Activated CD8-positive, alpha-beta T cell treated with anti-CD3 and anti-CD28 coated beads for 36 hours (primary cell): ENCODE measurements at regions of chr10 and their contacts with region 1.

Region 1: GRCh38 chr10:103712570-103713498 is 142.5 kb downstream of the SH3PXD2A start:
- DNase-seq: peak; percentile 92
- ATAC-seq: peak; percentile 97
- H3K4me3 Mint-ChIP-seq: no peak overlapping the region
- H3K27ac Mint-ChIP-seq: no peak overlapping the region
- H3K4me1 Mint-ChIP-seq: no peaks in the 10 kb centered on the region
- H3K27me3 Mint-ChIP-seq: no peaks in the 10 kb centered on the region
- CTCF ChIP-seq: peak; percentile 90

Region 2: GRCh38 chr10:103626178-103626577 is 86.7 kb before region 1 on chr10:
- CTCF ChIA-PET with region 1: no interaction called
- POLR2A ChIA-PET with region 1: no interaction called
- intact Hi-C with region 1: no loop called
- DNase-seq: no peak
- ATAC-seq: no peak
- H3K4me3 Mint-ChIP-seq: no peak overlapping the region
- H3K27ac Mint-ChIP-seq: no peak overlapping the region
- H3K4me1 Mint-ChIP-seq: no peaks in the 10 kb centered on the region
- H3K27me3 Mint-ChIP-seq: no peaks in the 10 kb centered on the region
- CTCF ChIP-seq: no peak

Region 3: DNA sequence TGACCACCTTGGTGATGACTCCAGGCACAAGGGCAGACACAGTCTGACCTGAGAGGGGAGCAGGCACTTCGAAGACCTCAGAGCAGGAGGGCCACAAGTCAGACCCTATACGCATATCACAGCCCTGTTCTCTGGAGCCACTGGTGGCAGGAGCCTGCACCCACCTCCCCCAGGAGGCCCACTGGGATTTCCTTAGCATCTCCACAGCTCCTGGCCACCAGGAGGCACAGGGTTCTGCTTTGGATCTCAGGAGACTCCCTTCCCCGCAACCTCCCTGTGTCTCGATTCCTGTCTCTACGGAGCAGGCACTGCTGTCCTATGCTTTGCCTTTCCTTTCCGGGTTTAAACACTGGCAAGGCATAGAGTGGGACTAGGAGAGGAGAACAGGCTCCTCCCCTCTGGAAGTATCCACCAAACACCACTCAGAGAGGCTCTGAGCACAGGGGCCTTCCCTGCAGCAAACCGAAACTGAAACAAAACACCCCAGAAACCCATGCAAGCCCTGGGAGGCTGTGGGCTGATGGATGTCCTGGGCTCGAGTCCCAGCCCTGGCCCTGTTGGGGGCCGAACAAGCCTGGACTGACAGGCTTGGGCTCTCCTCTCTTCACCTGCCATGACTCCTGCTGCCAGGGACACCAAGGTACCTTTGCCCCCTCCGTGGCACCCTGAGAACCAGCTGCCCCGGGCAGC is 53.0 kb before region 1 on chr10:
- CTCF ChIA-PET with region 1: no interaction called
- POLR2A ChIA-PET with region 1: no interaction called
- intact Hi-C with region 1: no loop called
- DNase-seq: peak; percentile 73
- ATAC-seq: peak; percentile 89
- H3K4me3 Mint-ChIP-seq: peak overlapping the region; percentile 83
- H3K27ac Mint-ChIP-seq: peak overlapping the region; percentile 85
- H3K4me1 Mint-ChIP-seq: peaks cover 14% of the 10 kb centered on the region
- H3K27me3 Mint-ChIP-seq: no peaks in the 10 kb centered on the region
- CTCF ChIP-seq: peak; percentile 42

Region 4: GRCh38 chr10:103701380-103702271 is 11.2 kb before region 1 on chr10:
- CTCF ChIA-PET with region 1: interaction called, 10 read pairs
- POLR2A ChIA-PET with region 1: no interaction called
- intact Hi-C with region 1: no loop called
- DNase-seq: no peak
- ATAC-seq: no peak
- H3K4me3 Mint-ChIP-seq: no peak overlapping the region
- H3K27ac Mint-ChIP-seq: no peak overlapping the region
- H3K4me1 Mint-ChIP-seq: peaks cover 5% of the 10 kb centered on the region
- H3K27me3 Mint-ChIP-seq: no peaks in the 10 kb centered on the region
- CTCF ChIP-seq: no peak

Region 5: DNA sequence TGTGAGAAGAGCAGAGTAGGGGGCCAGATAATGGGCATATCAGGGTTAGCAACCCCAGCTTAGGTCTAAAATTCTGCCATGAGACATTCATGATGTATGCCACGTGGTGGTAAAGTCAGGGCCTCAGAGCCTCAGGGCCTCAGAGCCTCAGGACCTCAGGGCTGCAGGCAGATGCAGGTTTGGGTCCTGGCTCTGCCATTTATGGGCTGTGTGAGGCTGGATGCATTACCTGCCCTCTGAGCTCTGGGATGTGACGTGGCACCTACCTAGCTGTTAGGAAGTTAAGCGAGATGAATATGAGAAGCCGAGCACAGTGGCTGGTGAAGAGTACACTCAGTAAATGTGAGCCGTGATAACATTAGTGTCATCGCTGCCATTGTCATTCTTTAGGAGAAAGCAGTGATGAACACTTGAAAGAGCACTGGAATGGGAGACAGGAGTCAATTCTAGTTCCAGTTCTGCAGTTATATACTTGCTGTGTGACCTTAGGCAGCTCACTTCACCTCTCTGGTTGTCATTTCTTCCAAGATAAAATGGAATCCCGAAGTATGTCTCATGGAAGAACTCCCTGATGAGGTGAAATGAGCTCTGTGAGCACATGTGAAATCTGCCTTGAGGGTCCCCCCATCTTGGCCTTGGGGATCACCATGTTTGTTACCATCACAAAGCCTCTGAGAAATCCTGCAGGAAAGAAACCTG is 15.3 kb after region 1 on chr10:
- CTCF ChIA-PET with region 1: interaction called, 13 read pairs
- POLR2A ChIA-PET with region 1: interaction called, 4 read pairs
- intact Hi-C with region 1: no loop called
- DNase-seq: no peak
- ATAC-seq: no peak
- H3K4me3 Mint-ChIP-seq: no peak overlapping the region
- H3K27ac Mint-ChIP-seq: no peak overlapping the region
- H3K4me1 Mint-ChIP-seq: no peaks in the 10 kb centered on the region
- H3K27me3 Mint-ChIP-seq: no peaks in the 10 kb centered on the region
- CTCF ChIP-seq: no peak

Region 6: DNA sequence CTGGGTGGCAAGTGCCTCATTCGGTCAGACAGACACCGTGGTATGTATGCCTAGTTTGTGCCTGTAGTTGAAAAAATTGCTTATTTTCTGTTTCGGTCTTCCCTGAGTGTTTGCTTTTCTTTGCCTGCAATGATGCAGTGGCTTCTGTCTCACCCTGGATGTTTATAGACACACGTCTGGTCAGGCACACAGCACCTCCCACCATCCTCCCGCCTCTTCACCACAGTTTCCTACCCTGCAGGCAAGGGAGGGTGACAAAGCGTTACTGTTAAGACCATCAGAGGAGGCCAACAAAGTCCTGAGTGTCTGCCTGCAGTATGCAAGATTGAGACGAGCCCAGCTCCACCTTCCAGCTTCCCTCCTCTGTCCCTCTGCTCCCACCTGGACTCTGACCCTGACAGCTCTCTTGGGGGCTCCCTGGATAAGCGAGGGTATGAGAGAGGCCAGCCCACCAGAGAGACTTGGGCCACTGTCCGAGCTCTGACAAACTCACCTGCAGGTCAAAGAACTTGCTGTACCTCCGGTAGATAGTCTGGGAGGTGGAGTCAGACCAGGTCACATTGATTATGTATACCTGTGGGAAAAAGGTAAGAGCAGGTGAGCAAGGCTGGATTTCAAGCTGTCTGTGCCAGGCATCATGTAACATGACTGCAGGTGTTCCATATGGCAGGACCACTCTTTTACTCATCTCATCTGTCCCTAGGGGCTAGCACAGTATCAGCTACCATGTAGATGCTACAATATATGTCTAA is 88.1 kb after region 1 on chr10:
- CTCF ChIA-PET with region 1: interaction called, 12 read pairs
- POLR2A ChIA-PET with region 1: interaction called, 3 read pairs
- intact Hi-C with region 1: no loop called
- DNase-seq: peak; percentile 79
- ATAC-seq: peak; percentile 97
- H3K4me3 Mint-ChIP-seq: no peak overlapping the region
- H3K27ac Mint-ChIP-seq: peak overlapping the region; percentile 39
- H3K4me1 Mint-ChIP-seq: peaks cover 20% of the 10 kb centered on the region
- H3K27me3 Mint-ChIP-seq: no peaks in the 10 kb centered on the region
- CTCF ChIP-seq: no peak

Region 7: DNA sequence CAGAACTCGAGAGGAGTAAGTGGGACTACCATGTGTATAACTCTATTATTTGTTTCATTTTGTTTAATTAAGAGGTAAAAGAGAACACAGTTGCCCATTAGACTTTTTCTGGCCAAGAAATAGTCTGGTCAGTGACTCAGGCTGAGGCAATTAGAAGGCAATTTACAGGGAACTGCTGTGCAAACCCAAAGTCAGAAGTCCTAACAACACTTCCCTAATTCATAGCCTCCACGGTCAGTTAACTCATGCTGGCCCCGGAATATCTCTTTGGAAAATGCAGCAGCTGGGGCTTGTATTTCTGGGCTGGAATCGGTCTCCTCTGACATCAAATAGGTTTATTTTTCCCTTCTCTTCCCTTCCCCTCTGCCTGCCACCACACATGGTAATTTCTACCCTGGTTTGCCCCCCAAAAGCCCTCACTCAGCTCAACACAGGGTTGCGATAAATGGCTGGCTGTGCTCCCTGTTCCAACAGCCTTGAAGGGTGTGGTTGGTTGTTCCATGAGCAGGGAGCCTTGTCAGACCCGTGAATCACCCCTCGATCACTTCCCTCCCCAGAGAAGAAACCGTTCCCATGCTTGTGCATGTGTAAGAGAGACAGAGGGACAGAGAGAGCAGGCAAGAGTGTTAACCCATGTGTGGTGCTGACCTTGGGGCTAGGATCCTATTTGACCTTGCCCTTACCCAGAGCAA is 137.2 kb after region 1 on chr10:
- CTCF ChIA-PET with region 1: interaction called, 109 read pairs
- POLR2A ChIA-PET with region 1: interaction called, 3 read pairs
- intact Hi-C with region 1: no loop called
- DNase-seq: no peak
- ATAC-seq: no peak
- H3K4me3 Mint-ChIP-seq: no peak overlapping the region
- H3K27ac Mint-ChIP-seq: no peak overlapping the region
- H3K4me1 Mint-ChIP-seq: peaks cover 19% of the 10 kb centered on the region
- H3K27me3 Mint-ChIP-seq: peaks cover 18% of the 10 kb centered on the region
- CTCF ChIP-seq: no peak

Region 8: GRCh38 chr10:103859161-103860086 is 146.6 kb after region 1 on chr10:
- CTCF ChIA-PET with region 1: interaction called, 109 read pairs
- POLR2A ChIA-PET with region 1: interaction called, 3 read pairs
- intact Hi-C with region 1: loop called (anchors 1 kb)
- DNase-seq: peak; percentile 79
- ATAC-seq: peak; percentile 71
- H3K4me3 Mint-ChIP-seq: no peak overlapping the region
- H3K27ac Mint-ChIP-seq: no peak overlapping the region
- H3K4me1 Mint-ChIP-seq: peaks cover 4% of the 10 kb centered on the region
- H3K27me3 Mint-ChIP-seq: peaks cover 19% of the 10 kb centered on the region
- CTCF ChIP-seq: peak; percentile 76